Activated CD4-positive, alpha-beta memory T cell treated with anti-CD3 and anti-CD28 coated beads, Interleukin-2, amount 10 ng/mL, durations not matched to agents 7 days and 5 days (primary cell): ENCODE measurements at regions of chr3 and their contacts with region 1.

Region 1: DNA sequence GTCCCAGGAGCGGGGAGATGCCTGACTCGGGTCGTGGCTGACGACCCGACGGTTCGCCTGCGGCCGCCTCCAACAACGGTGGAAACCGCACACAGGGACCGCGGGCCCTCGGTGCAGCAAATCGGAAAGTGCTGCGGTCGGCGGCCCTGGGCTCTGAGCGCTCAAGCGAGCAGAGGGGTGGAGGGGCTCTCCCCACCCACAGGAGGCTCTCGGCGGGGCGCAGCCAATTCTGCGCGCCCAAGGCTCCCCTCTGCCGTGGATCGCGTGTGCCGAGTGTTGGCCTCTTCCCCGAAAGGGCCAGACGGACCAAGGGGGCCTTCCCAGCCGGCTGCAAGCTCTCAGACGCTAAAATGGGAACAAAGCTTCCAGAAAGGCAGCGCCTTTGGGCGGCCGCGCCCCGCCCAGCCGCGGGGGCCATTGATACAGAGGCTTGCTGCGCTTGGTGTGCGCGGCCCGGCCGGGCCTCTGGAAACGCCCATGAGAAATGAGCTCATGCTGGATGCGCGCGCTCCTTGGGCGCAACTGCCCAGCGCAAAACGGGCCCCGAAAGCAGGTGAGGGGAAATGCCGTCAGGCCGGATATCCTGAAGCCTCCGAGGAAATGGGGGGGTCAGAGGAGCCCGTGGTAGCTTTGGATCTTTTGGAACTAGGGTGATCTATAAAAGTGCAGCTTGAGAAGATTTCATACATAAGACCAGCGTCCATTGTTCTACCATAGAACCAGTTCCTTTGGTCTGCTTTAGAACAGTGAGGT is 1.2 kb upstream of the GSK3B start:
- DNase-seq: peak; percentile 93
- H3K4me3 Mint-ChIP-seq: no peak overlapping the region
- H3K27ac Mint-ChIP-seq: no peak overlapping the region
- H3K4me1 Mint-ChIP-seq: peaks cover 24% of the 10 kb centered on the region
- H3K27me3 Mint-ChIP-seq: no peaks in the 10 kb centered on the region

Region 2: GRCh38 chr3:119293871-119294695 is 801.3 kb before region 1 on chr3 and contains the start of gene ARHGAP31:
- CTCF ChIA-PET with region 1: no interaction called
- POLR2A ChIA-PET with region 1: interaction called, 13 read pairs
- DNase-seq: peak; percentile 84
- H3K4me3 Mint-ChIP-seq: peak within 1 kb of the TSS; percentile 80
- H3K27ac Mint-ChIP-seq: peak within 1 kb of the TSS; percentile 76
- H3K4me1 Mint-ChIP-seq: peaks cover 47% of the 10 kb centered on the region
- H3K27me3 Mint-ChIP-seq: peaks cover 28% of the 10 kb centered on the region
- total RNA-seq, gene ARHGAP31: 3.7 to 4.5 TPM

Region 3: DNA sequence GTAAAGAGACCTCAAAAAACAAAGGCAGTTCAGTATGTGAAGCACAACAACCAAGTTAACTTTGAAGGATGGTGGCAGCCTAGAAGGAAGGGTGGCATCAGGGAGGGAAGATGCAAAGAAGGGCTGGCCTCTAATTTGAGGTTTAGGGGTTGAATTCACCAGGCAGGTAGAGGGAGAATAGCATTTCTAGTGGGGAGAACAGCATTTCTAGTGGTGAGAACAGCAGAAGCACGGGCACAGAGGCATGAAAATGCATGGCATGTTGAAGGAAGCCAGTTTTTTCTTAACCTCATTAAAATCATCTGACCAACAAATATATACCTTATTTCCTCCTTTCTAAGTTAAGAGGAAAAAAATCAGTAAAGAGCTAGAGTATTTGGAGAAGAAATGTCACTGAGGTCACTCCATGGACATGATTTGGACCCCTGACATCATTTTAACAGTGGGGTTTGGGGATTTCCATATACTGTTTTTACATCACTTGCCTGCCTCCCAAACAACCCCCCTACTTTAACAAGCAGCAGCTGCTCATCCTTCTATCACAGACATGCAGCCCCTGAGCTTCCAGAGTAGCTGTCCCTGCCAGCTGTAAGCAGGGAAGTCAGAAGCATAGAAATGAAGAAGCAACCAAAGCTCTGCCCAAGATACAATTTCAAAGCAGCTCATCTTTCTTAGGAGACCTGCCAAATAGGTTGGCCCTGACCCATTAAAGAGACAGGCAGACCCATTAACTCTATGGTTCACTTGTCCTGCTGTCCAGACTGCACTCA is 432.6 kb before region 1 on chr3:
- CTCF ChIA-PET with region 1: no interaction called
- POLR2A ChIA-PET with region 1: no interaction called
- DNase-seq: no peak
- H3K4me3 Mint-ChIP-seq: no peak overlapping the region
- H3K27ac Mint-ChIP-seq: no peak overlapping the region
- H3K4me1 Mint-ChIP-seq: peaks cover 18% of the 10 kb centered on the region
- H3K27me3 Mint-ChIP-seq: no peaks in the 10 kb centered on the region

Region 4: GRCh38 chr3:119810018-119810435 is 285.4 kb before region 1 on chr3:
- CTCF ChIA-PET with region 1: interaction called, 3 read pairs
- POLR2A ChIA-PET with region 1: interaction called, 12 read pairs
- DNase-seq: peak; percentile 51
- H3K4me3 Mint-ChIP-seq: peak overlapping the region; percentile 71
- H3K27ac Mint-ChIP-seq: no peak overlapping the region
- H3K4me1 Mint-ChIP-seq: peaks cover 10% of the 10 kb centered on the region
- H3K27me3 Mint-ChIP-seq: peaks cover 3% of the 10 kb centered on the region

Region 5: GRCh38 chr3:119856695-119857094 is 238.7 kb before region 1 on chr3:
- CTCF ChIA-PET with region 1: no interaction called
- POLR2A ChIA-PET with region 1: no interaction called
- DNase-seq: no peak
- H3K4me3 Mint-ChIP-seq: no peak overlapping the region
- H3K27ac Mint-ChIP-seq: no peak overlapping the region
- H3K4me1 Mint-ChIP-seq: peaks cover 4% of the 10 kb centered on the region
- H3K27me3 Mint-ChIP-seq: no peaks in the 10 kb centered on the region

Region 6: GRCh38 chr3:120081719-120082118 is 13.7 kb before region 1 on chr3:
- CTCF ChIA-PET with region 1: no interaction called
- POLR2A ChIA-PET with region 1: interaction called, 35 read pairs
- DNase-seq: no peak
- H3K4me3 Mint-ChIP-seq: no peak overlapping the region
- H3K27ac Mint-ChIP-seq: no peak overlapping the region
- H3K4me1 Mint-ChIP-seq: peaks cover 16% of the 10 kb centered on the region
- H3K27me3 Mint-ChIP-seq: no peaks in the 10 kb centered on the region

Region 7: DNA sequence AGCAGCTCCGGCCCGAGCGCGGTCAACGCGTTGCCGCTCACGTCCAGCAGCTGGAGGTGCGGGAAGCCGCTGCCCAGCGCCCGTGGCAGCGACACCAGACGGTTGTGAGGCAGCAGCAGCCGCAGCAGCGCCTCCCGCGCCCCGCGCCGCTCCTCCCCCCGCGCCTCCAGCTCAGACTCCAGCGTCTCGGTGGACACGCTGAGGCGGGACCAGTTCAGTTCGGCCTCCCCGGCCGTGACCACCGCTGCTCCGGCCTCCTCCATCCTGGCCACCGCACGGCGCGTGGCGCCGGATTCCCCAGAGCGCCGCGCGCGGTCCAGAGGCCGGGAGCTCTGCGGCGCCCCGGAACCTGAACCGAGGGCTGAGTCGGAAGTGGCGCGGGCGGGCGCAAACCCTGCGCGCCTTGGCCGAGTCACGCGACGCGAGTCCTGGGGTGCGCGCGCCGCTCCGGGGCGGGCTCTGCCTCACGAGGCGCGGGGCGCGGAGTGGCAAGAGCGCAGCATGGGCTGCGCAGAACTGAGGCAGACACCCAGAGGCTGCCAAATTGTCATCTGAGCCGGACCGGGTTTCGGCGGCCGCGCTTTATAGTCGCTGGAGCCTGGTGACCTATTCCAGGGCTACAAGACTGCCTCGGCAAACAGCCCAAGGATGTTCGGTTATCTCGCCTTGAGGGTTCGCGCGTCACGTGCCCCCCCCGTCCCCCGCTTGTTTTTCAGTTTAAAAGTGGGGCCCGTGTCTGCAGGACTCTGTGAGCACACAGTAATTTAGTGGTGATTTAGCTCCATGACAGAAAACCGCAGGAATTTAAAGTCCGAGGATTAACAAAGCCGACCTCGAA is 253.8 kb after region 1 on chr3 and contains the start of gene LRRC58:
- CTCF ChIA-PET with region 1: no interaction called
- POLR2A ChIA-PET with region 1: interaction called, 79 read pairs
- DNase-seq: peak; percentile 89
- H3K4me3 Mint-ChIP-seq: peak within 1 kb of the TSS; percentile 89
- H3K27ac Mint-ChIP-seq: peak within 1 kb of the TSS; percentile 85
- H3K4me1 Mint-ChIP-seq: peaks cover 47% of the 10 kb centered on the region
- H3K27me3 Mint-ChIP-seq: peaks cover 20% of the 10 kb centered on the region
- total RNA-seq, gene LRRC58: 23.2 to 24.8 TPM